AG04450 (cell line): ENCODE measurements at regions of chr1 and their contacts with region 1.

Region 1: GRCh38 chr1:31161571-31161970 is 78.1 kb downstream of the NKAIN1 start:
- DNase-seq: no peak
- H3K4me3 ChIP-seq: no peak overlapping the region
- H3K27ac ChIP-seq: no peak overlapping the region
- H3K27me3 ChIP-seq: peaks cover 4% of the 10 kb centered on the region
- CTCF ChIP-seq: no peak

Region 2: GRCh38 chr1:31174556-31174955 is 13.0 kb after region 1 on chr1:
- CTCF ChIA-PET with region 1: interaction called, 12 read pairs
- POLR2A ChIA-PET with region 1: interaction called, 9 read pairs
- DNase-seq: no peak
- H3K4me3 ChIP-seq: no peak overlapping the region
- H3K27ac ChIP-seq: no peak overlapping the region
- H3K27me3 ChIP-seq: no peaks in the 10 kb centered on the region
- CTCF ChIP-seq: no peak